Mammary epithelial cell (primary cell): ENCODE measurements at regions of chr11 and their contacts with region 1.

Region 1: GRCh38 chr11:43895601-43896000 is 15.0 kb downstream of the ALKBH3 start:
- DNase-seq: no peak
- H3K4me3 ChIP-seq: no peak overlapping the region
- H3K27ac ChIP-seq: no peak overlapping the region
- H3K4me1 ChIP-seq: no peaks in the 10 kb centered on the region
- H3K27me3 ChIP-seq: no peaks in the 10 kb centered on the region
- CTCF ChIP-seq: no peak

Region 2: GRCh38 chr11:43638717-43639116 is 256.9 kb before region 1 on chr11:
- CTCF ChIA-PET with region 1: no interaction called
- dilution Hi-C with region 1: no loop called
- in situ Hi-C with region 1: no loop called
- intact Hi-C with region 1: no loop called
- DNase-seq: no peak
- H3K4me3 ChIP-seq: no peak overlapping the region
- H3K27ac ChIP-seq: no peak overlapping the region
- H3K4me1 ChIP-seq: no peaks in the 10 kb centered on the region
- H3K27me3 ChIP-seq: peaks cover 2% of the 10 kb centered on the region
- CTCF ChIP-seq: no peak

Region 3: DNA sequence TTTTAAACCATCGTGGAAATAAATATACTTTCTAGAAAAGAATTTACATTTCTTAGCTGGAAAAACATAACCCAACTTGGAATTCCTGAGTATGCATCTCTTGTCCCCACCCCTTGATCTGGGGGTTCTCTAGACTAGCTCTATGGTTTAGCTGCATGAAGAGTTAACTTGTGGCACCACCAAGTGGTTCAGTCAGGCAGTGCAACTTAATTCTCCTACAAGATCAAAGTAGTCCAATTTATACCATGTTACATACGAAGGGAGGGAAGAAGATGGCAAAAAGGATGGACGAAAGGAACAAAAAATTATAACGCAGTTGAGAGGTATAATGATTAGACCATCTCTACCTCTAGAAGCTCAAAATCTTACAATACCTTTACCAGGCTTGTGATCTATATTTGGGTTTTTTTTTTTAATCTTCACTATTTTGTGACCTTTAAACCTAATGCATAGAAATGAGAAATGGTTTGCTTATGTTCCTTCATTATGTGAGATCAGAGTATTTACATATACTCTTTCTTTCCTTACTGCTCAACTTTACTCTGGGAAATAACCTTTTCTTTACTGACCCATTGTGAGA is 43.5 kb before region 1 on chr11:
- CTCF ChIA-PET with region 1: no interaction called
- dilution Hi-C with region 1: no loop called
- in situ Hi-C with region 1: no loop called
- intact Hi-C with region 1: no loop called
- DNase-seq: peak; percentile 59
- H3K4me3 ChIP-seq: no peak overlapping the region
- H3K27ac ChIP-seq: no peak overlapping the region
- H3K4me1 ChIP-seq: peaks cover 5% of the 10 kb centered on the region
- H3K27me3 ChIP-seq: no peaks in the 10 kb centered on the region
- CTCF ChIP-seq: peak; percentile 84 to 87

Region 4: DNA sequence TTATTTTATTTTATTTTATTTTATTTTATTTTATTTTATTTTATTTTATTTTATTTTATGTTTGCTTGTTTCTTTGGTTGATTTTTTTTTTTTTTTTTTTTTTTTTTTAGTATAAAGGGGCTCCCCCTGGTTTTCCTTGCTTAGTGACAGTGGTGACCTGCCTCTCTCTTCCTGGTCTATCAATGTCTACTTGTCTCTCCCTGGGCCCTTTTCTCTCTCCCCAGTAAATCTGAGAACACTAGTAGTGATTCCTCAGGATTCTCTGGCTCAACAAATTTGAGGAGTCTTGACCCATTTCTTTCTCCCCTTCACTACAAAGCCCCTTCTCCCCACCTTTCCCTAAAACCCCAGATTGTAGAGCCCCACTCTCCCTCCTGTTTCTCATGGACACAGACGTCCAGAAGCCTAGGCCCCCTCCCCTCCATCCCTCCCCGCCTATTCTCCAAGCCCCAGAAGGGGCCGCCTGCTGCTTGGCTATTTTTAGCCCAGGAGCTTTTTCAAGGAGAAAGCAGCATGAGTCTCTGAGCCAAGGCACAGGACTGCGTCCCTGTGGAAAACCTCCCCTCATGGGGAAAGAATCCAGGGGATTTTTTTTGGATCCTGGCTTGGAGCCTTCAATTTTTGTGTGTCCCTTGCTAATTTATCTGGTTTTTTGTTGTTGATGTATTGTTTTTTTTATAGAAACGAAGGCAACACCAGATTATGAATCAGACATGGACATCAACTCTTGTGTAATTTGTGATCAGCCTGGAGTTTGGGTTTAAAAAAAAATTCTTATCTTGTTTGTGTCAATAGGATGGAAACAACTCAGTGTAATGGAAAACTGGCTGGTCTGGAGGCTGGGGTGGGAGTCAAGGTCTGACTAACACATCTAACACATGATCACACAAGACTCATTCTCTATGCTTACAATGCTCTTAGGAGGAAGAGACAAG is 134.6 kb after region 1 on chr11:
- CTCF ChIA-PET with region 1: no interaction called
- dilution Hi-C with region 1: no loop called
- in situ Hi-C with region 1: loop called in 1 of 2 experiments (anchors 10 kb)
- intact Hi-C with region 1: no loop called
- DNase-seq: no peak
- H3K4me3 ChIP-seq: no peak overlapping the region
- H3K27ac ChIP-seq: no peak overlapping the region
- H3K4me1 ChIP-seq: no peaks in the 10 kb centered on the region
- H3K27me3 ChIP-seq: no peaks in the 10 kb centered on the region
- CTCF ChIP-seq: no peak

Region 5: DNA sequence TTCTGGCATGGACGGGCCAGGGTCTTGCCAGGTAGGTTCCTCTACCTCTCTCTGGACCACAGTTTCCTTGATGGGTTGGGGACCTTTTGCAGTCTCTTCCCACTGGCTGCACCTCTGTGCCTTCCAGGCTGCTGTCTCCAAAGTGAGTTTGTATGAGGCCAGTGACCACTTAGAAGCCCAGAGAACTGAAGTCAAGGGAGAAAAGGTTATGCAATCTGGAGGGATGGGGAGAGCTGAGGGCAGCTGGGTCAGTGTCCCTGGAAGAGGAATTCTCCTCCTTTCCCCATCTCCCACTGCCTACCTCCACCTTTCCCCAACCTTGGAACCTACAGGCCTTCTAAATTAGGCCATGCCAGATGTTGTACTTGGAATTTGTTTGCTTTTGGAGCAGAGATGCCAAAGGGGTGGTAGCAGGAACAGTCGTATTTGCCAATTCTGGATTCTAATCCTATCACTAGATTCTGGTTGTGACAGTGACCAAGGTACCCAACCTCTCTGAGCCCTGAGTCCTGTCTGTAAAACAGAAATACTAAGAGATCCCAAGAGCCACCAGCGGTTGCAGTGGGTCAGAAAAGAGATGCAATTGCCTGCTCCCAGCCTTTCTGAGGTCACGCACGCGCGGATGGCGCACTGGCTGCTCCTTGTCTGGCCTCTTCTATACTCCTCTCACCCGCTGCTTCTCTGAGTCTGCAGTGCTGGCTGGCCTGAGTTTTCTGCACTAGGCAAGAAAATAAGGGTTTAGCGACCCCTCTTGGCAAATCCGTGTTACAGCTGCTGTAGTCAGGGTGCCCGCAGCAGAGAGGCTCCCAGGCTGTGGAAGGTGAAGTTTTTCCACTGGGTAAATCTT is 141.4 kb after region 1 on chr11:
- CTCF ChIA-PET with region 1: no interaction called
- dilution Hi-C with region 1: no loop called
- in situ Hi-C with region 1: no loop called
- intact Hi-C with region 1: loop called (anchors 1 kb)
- DNase-seq: peak; percentile 51
- H3K4me3 ChIP-seq: no peak overlapping the region
- H3K27ac ChIP-seq: no peak overlapping the region
- H3K4me1 ChIP-seq: no peaks in the 10 kb centered on the region
- H3K27me3 ChIP-seq: no peaks in the 10 kb centered on the region
- CTCF ChIP-seq: peak; percentile 73 to 87